Activated CD8-positive, alpha-beta T cell treated with anti-CD3 and anti-CD28 coated beads for 36 hours (primary cell): ENCODE measurements at regions of chr10 and their contacts with region 1.

Region 1: DNA sequence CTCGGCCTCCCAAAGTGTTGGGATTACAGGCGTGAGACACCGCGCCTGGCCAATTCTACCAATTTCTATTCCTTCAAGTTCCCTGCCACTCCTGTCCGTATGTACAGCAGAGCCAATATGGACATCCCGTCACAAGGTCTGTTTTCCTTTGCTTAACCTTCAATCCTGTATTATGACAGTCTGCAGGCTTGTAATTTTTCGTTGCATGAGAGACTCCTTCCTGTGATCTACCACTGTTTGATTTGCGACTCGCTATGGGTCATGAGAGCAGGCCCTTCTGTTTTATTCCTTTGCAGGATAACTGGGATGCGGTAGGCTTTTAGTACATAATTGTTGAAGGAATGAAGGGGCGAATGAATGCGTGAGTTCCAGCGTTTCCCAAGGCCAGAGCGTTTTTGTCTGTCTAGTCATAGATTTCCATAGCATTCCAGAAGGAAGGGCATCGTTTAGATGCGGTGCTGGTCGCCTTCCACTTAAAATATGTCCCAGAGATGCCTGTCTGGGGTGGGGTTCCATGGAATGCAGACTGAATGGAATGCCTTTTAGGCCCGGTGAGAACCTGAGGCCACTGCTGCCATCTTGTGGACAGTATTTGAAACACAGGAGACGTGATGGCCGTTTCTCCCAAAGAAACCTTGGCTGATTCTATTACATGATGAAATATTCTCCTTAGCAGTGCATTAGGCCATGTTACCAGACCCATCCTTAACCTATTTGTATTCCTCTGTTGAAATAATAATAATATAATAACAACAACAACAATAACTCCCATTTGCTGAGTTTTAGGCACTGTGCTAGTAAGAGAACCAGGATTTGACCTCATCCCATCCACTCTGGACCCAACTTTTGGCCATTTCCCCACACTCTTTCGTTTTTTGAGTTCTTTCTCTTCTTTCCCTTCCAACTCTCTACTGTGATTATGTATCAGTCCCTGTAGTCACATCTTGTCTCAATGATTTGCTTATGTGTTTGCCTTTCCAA is 193.2 kb downstream of the MYOF start:
- DNase-seq: peak; percentile 66
- ATAC-seq: peak; percentile 37
- H3K4me3 Mint-ChIP-seq: no peak overlapping the region
- H3K27ac Mint-ChIP-seq: no peak overlapping the region
- H3K4me1 Mint-ChIP-seq: no peaks in the 10 kb centered on the region
- H3K27me3 Mint-ChIP-seq: no peaks in the 10 kb centered on the region
- CTCF ChIP-seq: peak; percentile 82

Region 2: GRCh38 chr10:93080350-93081046 is 208.4 kb before region 1 on chr10:
- CTCF ChIA-PET with region 1: interaction called, 6 read pairs
- POLR2A ChIA-PET with region 1: no interaction called
- intact Hi-C with region 1: loop called (anchors 2 kb)
- DNase-seq: peak; percentile 64
- ATAC-seq: peak; percentile 72
- H3K4me3 Mint-ChIP-seq: no peak overlapping the region
- H3K27ac Mint-ChIP-seq: no peak overlapping the region
- H3K4me1 Mint-ChIP-seq: peaks cover 7% of the 10 kb centered on the region
- H3K27me3 Mint-ChIP-seq: peaks cover 38% of the 10 kb centered on the region
- CTCF ChIP-seq: peak; percentile 92

Region 3: GRCh38 chr10:93115661-93116383 is 173.1 kb before region 1 on chr10:
- CTCF ChIA-PET with region 1: interaction called, 10 read pairs
- POLR2A ChIA-PET with region 1: no interaction called
- intact Hi-C with region 1: no loop called
- DNase-seq: peak; percentile 80
- ATAC-seq: peak; percentile 80
- H3K4me3 Mint-ChIP-seq: no peak overlapping the region
- H3K27ac Mint-ChIP-seq: no peak overlapping the region
- H3K4me1 Mint-ChIP-seq: peaks cover 9% of the 10 kb centered on the region
- H3K27me3 Mint-ChIP-seq: peaks cover 8% of the 10 kb centered on the region
- CTCF ChIP-seq: peak; percentile 55

Region 4: GRCh38 chr10:93319896-93320295 is 31.0 kb after region 1 on chr10:
- CTCF ChIA-PET with region 1: no interaction called
- POLR2A ChIA-PET with region 1: no interaction called
- intact Hi-C with region 1: no loop called
- DNase-seq: no peak
- ATAC-seq: no peak
- H3K4me3 Mint-ChIP-seq: no peak overlapping the region
- H3K27ac Mint-ChIP-seq: no peak overlapping the region
- H3K4me1 Mint-ChIP-seq: no peaks in the 10 kb centered on the region
- H3K27me3 Mint-ChIP-seq: no peaks in the 10 kb centered on the region
- CTCF ChIP-seq: no peak